ENCODE measurements at regions of chr6 and their contacts with region 1.

Region 1: GRCh38 chr6:75543311-75543710 is 49.7 kb upstream of the FILIP1 start:
- DNase-seq: no peak
- ATAC-seq: no peak
- H3K4me3 ChIP-seq: no peak overlapping the region
- H3K27ac ChIP-seq: no peak overlapping the region
- H3K4me1 ChIP-seq: no peaks in the 10 kb centered on the region; the same call in none of the 2 replicates
- H3K27me3 ChIP-seq: no peaks in the 10 kb centered on the region
- CTCF ChIP-seq: no peak
- POLR2A ChIP-seq: no peak
- RAD21 ChIP-seq: no peak

Region 2: DNA sequence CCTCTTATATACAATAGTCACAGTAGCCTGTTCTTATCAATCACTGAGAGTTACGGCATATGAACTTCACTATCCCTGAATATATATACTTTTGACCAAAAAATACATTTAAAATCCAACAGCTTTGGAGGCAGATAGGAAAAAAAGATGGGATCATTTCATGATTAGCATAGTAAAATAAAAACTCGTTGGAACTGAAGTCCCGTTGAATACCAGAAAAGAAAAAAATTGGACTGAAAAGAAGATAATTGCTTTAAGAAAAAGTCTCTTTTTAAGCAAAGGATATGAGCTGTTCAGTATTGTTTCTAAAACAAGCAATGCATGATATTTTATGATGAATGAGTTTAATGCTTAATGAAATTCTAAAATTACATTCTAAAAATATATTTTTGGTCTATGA is 45.3 kb before region 1 on chr6:
- CTCF ChIA-PET with region 1: no interaction called
- POLR2A ChIA-PET with region 1: no interaction called
- dilution Hi-C with region 1: no loop called
- in situ Hi-C with region 1: no loop called
- intact Hi-C with region 1: loop called (anchors 1 kb)
- DNase-seq: no peak
- ATAC-seq: no peak
- H3K4me3 ChIP-seq: no peak overlapping the region
- H3K27ac ChIP-seq: no peak overlapping the region
- H3K4me1 ChIP-seq: no peaks in the 10 kb centered on the region
- H3K27me3 ChIP-seq: no peaks in the 10 kb centered on the region
- CTCF ChIP-seq: no peak
- POLR2A ChIP-seq: no peak
- RAD21 ChIP-seq: no peak

Measured in IMR-90 (cell line).